Motor neuron (in vitro differentiated cells): ENCODE measurements at regions of chr1 and their contacts with region 1.

Region 1: DNA sequence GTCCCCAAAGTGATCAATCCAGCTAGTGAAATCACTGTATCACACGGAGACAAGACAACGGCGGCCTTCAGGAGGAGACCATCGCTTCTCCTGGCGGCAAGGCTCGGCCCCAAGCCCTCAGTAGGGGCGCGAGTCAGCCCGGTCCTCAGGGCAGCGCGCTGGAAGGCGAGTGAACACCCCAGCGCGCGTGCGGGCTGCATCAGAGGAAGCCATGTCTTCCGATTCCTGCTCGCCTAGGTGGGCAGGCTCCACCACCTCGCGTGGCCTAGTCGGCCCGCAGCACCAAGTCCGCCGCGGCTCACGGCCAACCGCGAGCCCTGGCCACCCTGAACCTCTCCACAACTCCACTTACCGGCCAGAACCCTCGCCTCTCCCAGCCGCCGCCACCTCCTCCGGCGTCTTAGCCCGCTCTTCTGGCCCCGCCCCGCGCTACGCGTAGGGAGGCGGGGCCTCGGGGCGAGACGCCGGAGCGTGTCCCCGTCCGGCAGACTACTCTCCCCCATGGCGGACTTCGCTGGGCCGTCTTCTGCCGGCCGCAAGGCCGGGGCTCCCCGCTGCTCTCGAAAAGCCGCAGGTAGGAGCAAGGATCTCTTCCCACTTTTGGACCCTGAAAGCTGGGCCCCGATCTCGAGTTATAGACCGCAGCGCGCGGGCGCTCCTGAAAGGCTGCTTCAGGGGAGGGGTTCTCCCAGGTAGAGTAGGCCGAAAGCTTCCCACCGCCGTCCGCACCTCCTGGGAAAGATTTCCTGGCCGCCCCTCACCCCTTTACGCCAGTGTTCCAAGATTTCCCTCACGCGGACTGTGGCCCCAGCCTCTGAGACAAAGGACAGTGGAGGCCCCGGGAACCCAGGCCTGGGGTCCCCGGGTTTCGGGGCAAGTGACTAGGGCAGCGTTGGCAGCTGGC is at the starts of genes GLMN and RPAP2:
- ATAC-seq: peak; percentile 94 to 98 (median 97)
- H3K4me3 ChIP-seq: peak within 1 kb of the TSS; percentile 78 to 90 (median 88)
- H3K27ac ChIP-seq: peak within 1 kb of the TSS; percentile 88 to 94
- H3K4me1 ChIP-seq: peaks cover 6 to 18% of the 10 kb centered on the region in 2 donors
- total RNA-seq, gene GLMN: 10.7 to 32.1 (median 20.9) TPM
- total RNA-seq, gene RPAP2: 14.5 to 32.4 (median 21.3) TPM

Region 2: DNA sequence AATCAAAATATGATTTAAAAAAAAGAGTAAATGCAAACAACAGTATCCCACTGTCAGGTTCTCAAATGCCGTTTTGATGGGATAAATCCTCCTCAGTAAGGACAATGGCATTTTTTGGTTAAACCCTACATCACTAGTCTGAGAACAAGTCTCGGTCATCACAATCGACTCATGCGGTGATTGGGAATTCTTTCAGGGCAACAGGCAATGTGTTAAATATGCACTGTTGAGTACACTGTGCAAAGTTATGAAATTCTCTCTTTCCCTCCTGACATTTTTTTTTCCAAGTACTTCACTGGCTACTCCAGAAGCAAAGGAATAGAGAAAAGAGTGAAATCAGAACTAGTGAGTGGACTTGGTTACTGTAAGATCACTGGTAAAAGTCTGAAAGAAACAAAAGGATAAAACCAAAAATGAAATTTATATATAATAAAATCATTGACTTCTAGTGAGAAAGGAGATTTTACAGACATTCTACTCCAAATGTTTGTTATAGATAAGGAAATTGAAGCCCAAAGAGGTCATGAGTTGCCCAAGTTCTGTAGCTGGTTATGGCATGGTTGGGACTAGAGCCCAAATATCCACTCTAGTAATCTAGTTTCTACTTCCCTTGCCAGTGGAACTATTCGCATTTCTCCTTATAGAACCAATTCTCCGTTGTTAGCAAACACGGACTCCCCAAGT is 524.2 kb before region 1 on chr1:
- in situ Hi-C with region 1: no loop called
- ATAC-seq: no peak
- H3K4me3 ChIP-seq: no peak overlapping the region
- H3K27ac ChIP-seq: no peak overlapping the region
- H3K4me1 ChIP-seq: peaks cover 36 to 37% of the 10 kb centered on the region in 2 donors

Region 3: GRCh38 chr1:91997607-91998195 is 301.1 kb before region 1 on chr1:
- in situ Hi-C with region 1: loop called in 2 of 9 experiments (anchors 25 kb)
- ATAC-seq: no peak
- H3K4me3 ChIP-seq: no peak overlapping the region
- H3K27ac ChIP-seq: no peak overlapping the region
- H3K4me1 ChIP-seq: no peaks in the 10 kb centered on the region

Region 4: GRCh38 chr1:92016720-92017316 is 282.0 kb before region 1 on chr1:
- in situ Hi-C with region 1: loop called in 1 of 9 experiments (anchors 25 kb)
- ATAC-seq: no peak
- H3K4me3 ChIP-seq: no peak overlapping the region
- H3K27ac ChIP-seq: no peak overlapping the region
- H3K4me1 ChIP-seq: no peaks in the 10 kb centered on the region

Region 5: GRCh38 chr1:93313026-93313425 is 1014.2 kb after region 1 on chr1:
- in situ Hi-C with region 1: no loop called
- ATAC-seq: no peak
- H3K4me3 ChIP-seq: no peak overlapping the region
- H3K27ac ChIP-seq: no peak overlapping the region
- H3K4me1 ChIP-seq: no peaks in the 10 kb centered on the region